CD4-positive, alpha-beta T cell (primary cell): ENCODE measurements at regions of chr14 and their contacts with region 1.

Region 1: GRCh38 chr14:24232121-24232644 is at the start of gene NEDD8:
- DNase-seq: peak; percentile 73 to 94 (median 84)
- ATAC-seq: peak; percentile 87
- H3K4me3 ChIP-seq: peak within 1 kb of the TSS; percentile 98
- H3K4me3 Mint-ChIP-seq: peak within 1 kb of the TSS; percentile 96
- H3K27ac ChIP-seq: peak within 1 kb of the TSS; percentile 81 to 95
- H3K27ac Mint-ChIP-seq: peak within 1 kb of the TSS; percentile 93
- H3K4me1 ChIP-seq: peaks cover 29% of the 10 kb centered on the region
- H3K4me1 Mint-ChIP-seq: peaks cover 66% of the 10 kb centered on the region
- H3K27me3 ChIP-seq: no peaks in the 10 kb centered on the region
- H3K27me3 Mint-ChIP-seq: no peaks in the 10 kb centered on the region
- CTCF ChIP-seq: no peak
- total RNA-seq, gene NEDD8: 42.0 to 43.5 TPM

Region 2: DNA sequence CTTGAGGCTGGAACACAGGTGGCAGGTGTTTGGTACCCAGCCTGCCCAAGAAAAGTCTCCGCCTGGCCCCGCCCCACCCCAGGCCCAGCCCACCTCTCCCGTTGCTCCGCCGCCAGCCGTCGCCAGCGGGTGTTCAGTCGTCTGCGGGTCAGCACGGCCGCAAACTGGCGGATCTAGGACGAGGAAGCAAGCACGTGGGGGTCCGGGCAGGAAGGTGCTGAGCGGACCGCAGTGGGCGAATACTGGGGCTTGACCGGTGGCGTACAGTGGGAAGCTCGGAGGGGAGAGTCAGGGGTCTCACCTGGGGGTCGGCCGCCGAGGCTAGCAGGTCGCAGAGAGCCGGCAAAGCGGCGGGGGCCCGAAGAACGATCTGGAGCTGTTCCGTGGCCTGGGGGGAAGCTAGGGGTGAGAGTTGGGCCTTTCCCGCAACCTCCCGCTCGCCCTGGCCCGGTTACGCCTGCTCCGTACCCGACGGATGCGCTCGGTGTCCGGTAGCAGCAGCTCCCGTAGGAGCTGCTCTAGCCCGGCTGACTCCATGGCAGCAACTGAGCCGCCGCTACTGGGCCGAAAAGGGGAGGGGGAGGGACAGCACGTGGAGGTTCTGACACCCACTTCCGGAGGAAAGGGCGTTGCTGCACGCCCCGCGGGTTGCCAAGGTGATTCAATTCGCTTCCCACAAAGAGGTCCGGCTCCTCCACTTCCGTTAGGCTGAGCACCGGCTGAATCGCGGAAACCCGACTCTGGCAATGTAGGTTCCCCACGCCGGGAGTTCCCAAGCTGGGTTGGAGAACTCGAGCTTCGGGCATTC is 43.7 kb before region 1 on chr14 and contains the start of gene IPO4:
- CTCF ChIA-PET with region 1: no interaction called
- POLR2A ChIA-PET with region 1: interaction called, 4 read pairs
- intact Hi-C with region 1: loop called in 1 of 2 experiments (anchors 2 kb)
- DNase-seq: peak; percentile 86 to 98 (median 94)
- ATAC-seq: peak; percentile 91
- H3K4me3 ChIP-seq: peak within 1 kb of the TSS; percentile 75
- H3K4me3 Mint-ChIP-seq: peak within 1 kb of the TSS; percentile 93
- H3K27ac ChIP-seq: peak within 1 kb of the TSS; percentile 70 to 88
- H3K27ac Mint-ChIP-seq: peak within 1 kb of the TSS; percentile 91
- H3K4me1 ChIP-seq: peaks cover 32% of the 10 kb centered on the region
- H3K4me1 Mint-ChIP-seq: peaks cover 45% of the 10 kb centered on the region
- H3K27me3 ChIP-seq: no peaks in the 10 kb centered on the region
- H3K27me3 Mint-ChIP-seq: no peaks in the 10 kb centered on the region
- CTCF ChIP-seq: no peak
- total RNA-seq, gene IPO4: 36.6 to 37.9 TPM

Region 3: GRCh38 chr14:24195191-24196070 is 36.8 kb before region 1 on chr14 and contains the start of gene TM9SF1:
- CTCF ChIA-PET with region 1: interaction called, 3 read pairs
- POLR2A ChIA-PET with region 1: interaction called, 11 read pairs
- intact Hi-C with region 1: loop called in 1 of 2 experiments (anchors 5 kb)
- DNase-seq: peak; percentile 78 to 95 (median 86)
- ATAC-seq: peak; percentile 88
- H3K4me3 ChIP-seq: peak within 1 kb of the TSS; percentile 93
- H3K4me3 Mint-ChIP-seq: peak within 1 kb of the TSS; percentile 87
- H3K27ac ChIP-seq: peak within 1 kb of the TSS; percentile 97 to 99
- H3K27ac Mint-ChIP-seq: peak within 1 kb of the TSS; percentile 92
- H3K4me1 ChIP-seq: peaks cover 37% of the 10 kb centered on the region
- H3K4me1 Mint-ChIP-seq: peaks cover 51% of the 10 kb centered on the region
- H3K27me3 ChIP-seq: no peaks in the 10 kb centered on the region
- H3K27me3 Mint-ChIP-seq: no peaks in the 10 kb centered on the region
- CTCF ChIP-seq: no peak
- total RNA-seq, gene TM9SF1: 12.9 to 13.0 TPM

Region 4: DNA sequence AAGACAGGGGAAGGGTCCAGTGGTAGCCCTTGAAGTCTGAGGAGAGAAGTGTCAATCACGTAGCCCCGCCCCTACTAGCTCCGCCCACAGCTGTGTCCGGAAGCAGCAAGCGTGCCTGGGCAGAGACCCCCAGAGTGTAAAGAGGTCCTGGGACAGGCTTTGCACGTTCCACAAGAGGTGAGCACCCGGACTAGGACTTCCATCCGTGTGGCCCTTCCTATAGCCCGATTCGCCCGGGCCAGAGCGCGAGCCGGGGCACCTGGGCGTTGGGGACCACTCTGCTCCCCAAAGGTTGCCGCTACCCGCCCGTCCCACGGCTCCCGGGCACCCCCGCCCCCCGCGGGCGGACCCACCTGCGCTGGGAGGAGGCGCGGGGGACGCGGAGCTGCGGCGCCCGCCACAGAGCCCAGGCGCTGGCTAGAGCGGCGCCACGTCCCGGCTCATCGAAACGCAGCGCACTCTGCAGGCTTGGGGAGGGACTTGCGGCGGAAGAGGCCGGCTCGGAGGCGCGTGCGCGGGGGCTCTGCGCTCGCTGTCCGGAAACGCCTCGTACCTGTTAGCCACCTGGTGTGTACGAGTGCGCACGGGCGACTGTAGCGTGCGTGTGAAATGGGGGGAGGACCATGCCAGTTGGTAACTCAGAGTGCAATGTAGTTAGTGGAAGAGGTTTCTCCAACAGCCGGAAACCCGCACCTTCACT is 39.1 kb after region 1 on chr14 and contains the start of gene RABGGTA:
- CTCF ChIA-PET with region 1: no interaction called
- POLR2A ChIA-PET with region 1: interaction called, 7 read pairs
- intact Hi-C with region 1: loop called (anchors 1 to 5 kb)
- DNase-seq: peak; percentile 84 to 99 (median 92)
- ATAC-seq: peak; percentile 83
- H3K4me3 ChIP-seq: peak within 1 kb of the TSS; percentile 86
- H3K4me3 Mint-ChIP-seq: peak within 1 kb of the TSS; percentile 96
- H3K27ac ChIP-seq: peak within 1 kb of the TSS; percentile 92 to 95
- H3K27ac Mint-ChIP-seq: peak within 1 kb of the TSS; percentile 97
- H3K4me1 ChIP-seq: peaks cover 43% of the 10 kb centered on the region
- H3K4me1 Mint-ChIP-seq: peaks cover 40% of the 10 kb centered on the region
- H3K27me3 ChIP-seq: no peaks in the 10 kb centered on the region
- H3K27me3 Mint-ChIP-seq: no peaks in the 10 kb centered on the region
- CTCF ChIP-seq: peak; percentile 75
- total RNA-seq, gene RABGGTA: 52.3 to 55.2 TPM

Region 5: DNA sequence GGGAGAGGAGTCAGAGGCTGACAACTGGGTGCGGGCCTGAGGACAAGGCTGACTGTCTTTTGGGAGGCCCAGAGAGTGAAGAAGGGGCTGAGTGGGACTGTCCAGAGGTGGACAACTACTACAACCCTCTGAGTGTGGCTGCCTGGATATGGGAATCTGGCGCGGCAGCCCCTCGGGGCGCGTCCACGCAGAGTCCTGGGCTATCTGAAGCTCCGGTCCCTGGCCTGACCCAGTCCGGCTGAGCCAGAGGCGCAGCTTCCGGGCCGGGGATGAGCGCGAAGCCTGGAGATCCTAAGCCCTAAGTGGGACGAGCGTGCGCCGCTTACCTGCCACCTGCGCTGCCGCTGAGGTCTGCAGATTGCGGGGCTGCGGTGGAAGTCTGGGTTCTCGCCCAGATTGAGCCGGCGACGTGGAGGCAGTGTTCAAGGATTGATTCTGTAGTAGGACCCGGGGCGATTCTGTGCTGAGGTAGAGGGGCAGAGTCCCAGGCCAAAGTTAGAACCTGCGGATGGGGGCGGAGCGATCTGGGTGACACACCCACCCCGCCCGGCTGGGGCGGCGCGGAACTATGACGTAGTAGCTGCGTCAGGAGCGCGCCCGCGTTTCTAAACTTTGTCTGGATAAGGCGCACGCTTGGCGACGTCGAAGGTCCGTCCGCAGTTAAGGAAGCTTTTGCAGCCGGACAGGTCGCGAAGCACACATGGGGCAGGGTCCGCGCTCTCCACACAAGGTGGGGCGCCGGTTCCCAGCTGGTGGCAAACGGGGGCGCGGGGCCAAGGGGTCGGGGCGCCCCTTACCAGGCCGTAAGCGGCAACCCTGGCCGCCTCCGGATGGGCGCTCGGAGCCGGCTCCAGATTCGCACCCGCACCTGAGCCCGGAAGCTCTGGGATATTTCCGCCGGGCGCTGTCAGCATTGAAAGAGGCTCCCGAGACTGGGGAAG is 67.3 kb after region 1 on chr14 and contains the starts of genes DHRS1 and NOP9:
- CTCF ChIA-PET with region 1: interaction called, 13 read pairs
- POLR2A ChIA-PET with region 1: no interaction called
- intact Hi-C with region 1: no loop called
- DNase-seq: peak; percentile 86 to 98 (median 92)
- ATAC-seq: peak; percentile 77
- H3K4me3 ChIP-seq: peak within 1 kb of the TSS; percentile 87
- H3K4me3 Mint-ChIP-seq: peak within 1 kb of the TSS; percentile 99
- H3K27ac ChIP-seq: peak within 1 kb of the TSS; percentile 81 to 87
- H3K27ac Mint-ChIP-seq: peak within 1 kb of the TSS; percentile 98
- H3K4me1 ChIP-seq: peaks cover 56% of the 10 kb centered on the region
- H3K4me1 Mint-ChIP-seq: peaks cover 64% of the 10 kb centered on the region
- H3K27me3 ChIP-seq: no peaks in the 10 kb centered on the region
- H3K27me3 Mint-ChIP-seq: no peaks in the 10 kb centered on the region
- CTCF ChIP-seq: no peak
- total RNA-seq, gene DHRS1: 21.5 to 23.5 TPM
- total RNA-seq, gene NOP9: 25.9 to 27.5 TPM

Region 6: DNA sequence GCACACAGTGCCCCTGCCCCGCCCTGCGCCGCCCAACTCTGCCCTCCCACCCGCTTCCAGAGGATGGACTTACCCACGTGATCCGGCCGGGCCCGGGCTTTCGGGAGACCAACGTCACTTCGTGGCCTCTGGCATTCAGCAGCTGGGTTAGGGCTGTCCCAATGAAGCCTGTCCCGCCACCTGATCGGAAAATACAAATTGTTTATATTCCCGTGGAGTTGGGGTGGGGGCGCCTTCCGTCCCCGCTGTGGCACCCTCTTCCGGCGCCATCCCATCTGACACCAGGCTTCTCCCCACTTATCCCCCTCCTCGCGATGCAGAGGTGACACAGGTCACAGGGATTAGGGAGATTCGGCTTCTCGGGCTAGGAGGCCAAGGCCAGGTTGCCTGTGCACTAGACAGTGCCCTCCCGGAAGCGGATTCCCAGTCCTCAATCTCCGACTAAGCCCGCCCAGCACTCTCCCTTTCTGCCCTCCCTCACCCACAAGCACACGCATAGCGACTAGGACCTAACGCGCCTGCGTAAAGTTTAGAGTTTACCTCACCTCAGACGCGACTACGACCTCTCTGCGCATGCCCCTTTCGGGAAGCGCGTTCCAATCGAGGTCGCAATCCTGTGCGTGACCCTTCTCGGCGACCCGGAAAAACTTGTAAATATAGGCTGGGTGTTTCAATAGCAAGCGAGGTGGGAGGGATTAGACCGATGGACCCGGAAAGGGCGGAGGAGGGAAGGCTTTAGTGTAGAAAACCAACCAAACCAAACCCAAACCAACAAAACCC is 210.3 kb after region 1 on chr14 and contains the start of gene SDR39U1:
- CTCF ChIA-PET with region 1: no interaction called
- POLR2A ChIA-PET with region 1: interaction called, 3 read pairs
- intact Hi-C with region 1: loop called in 1 of 2 experiments (anchors 5 kb)
- DNase-seq: peak; percentile 90 to 100 (median 96)
- ATAC-seq: peak; percentile 86
- H3K4me3 ChIP-seq: peak within 1 kb of the TSS; percentile 88
- H3K4me3 Mint-ChIP-seq: peak within 1 kb of the TSS; percentile 88
- H3K27ac ChIP-seq: peak within 1 kb of the TSS; percentile 93 to 99
- H3K27ac Mint-ChIP-seq: peak within 1 kb of the TSS; percentile 90
- H3K4me1 ChIP-seq: peaks cover 32% of the 10 kb centered on the region
- H3K4me1 Mint-ChIP-seq: peaks cover 53% of the 10 kb centered on the region
- H3K27me3 ChIP-seq: no peaks in the 10 kb centered on the region
- H3K27me3 Mint-ChIP-seq: no peaks in the 10 kb centered on the region
- CTCF ChIP-seq: no peak
- total RNA-seq, gene SDR39U1: 71.7 to 74.7 TPM